Left ventricle myocardium inferior (tissue), 1 donor: ENCODE measurements at regions of chr7 and their contacts with region 1.

Region 1: GRCh38 chr7:42493436-42494238 is 256.6 kb upstream of the GLI3 start:
- DNase-seq: peak; percentile 76
- H3K4me3 ChIP-seq: peak overlapping the region; percentile 62
- H3K27ac ChIP-seq: peak overlapping the region; percentile 74
- H3K4me1 ChIP-seq: peaks cover 16% of the 10 kb centered on the region
- H3K27me3 ChIP-seq: peaks cover 44% of the 10 kb centered on the region
- CTCF ChIP-seq: no peak

Region 2: DNA sequence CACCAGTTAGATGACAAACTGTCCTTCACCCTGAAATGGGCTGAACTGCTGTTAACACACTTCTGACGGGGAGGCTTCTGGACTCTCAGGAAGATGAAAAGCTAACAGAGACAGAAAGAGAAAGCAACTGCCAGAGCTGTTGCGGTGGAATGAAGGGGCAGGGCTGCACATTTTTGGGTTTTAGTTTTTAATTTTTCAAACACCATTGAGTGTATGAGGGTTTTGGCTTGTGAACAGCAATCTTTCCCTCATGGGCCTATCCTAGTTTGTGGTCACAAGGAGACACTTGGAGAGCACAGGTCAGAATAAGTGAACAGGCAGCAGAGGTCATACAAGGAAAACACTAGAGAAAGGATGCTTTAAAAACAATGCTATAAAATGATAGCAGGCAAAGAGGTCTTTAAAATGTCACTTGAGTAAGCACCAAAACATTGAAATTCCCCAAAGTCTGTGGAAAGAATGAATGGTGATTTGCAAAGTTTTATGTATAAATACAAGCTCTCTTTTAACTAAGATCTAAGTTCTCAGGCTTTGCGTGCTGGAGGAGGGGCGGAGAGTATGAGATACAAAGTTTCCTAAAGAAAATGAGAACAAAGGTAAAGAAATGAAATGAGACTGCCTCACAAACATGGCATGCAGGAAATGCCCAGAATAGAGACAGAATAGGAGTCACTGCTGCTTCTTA is 155.3 kb before region 1 on chr7:
- intact Hi-C with region 1: loop called (anchors 10 kb)
- DNase-seq: no peak
- H3K4me3 ChIP-seq: no peak overlapping the region
- H3K27ac ChIP-seq: no peak overlapping the region
- H3K4me1 ChIP-seq: no peaks in the 10 kb centered on the region
- H3K27me3 ChIP-seq: no peaks in the 10 kb centered on the region
- CTCF ChIP-seq: no peak